Activated CD4-positive, alpha-beta memory T cell treated with anti-CD3 and anti-CD28 coated beads for 36 hours (primary cell): ENCODE measurements at regions of chr7 and their contacts with region 1.

Region 1: GRCh38 chr7:72493850-72494661 is 81.9 kb upstream of the CALN1 start:
- DNase-seq: peak; percentile 56
- H3K4me3 Mint-ChIP-seq: no peak overlapping the region
- H3K27ac Mint-ChIP-seq: no peak overlapping the region
- H3K4me1 Mint-ChIP-seq: no peaks in the 10 kb centered on the region
- H3K27me3 Mint-ChIP-seq: no peaks in the 10 kb centered on the region

Region 2: GRCh38 chr7:71752171-71752935 is 741.7 kb before region 1 on chr7:
- CTCF ChIA-PET with region 1: interaction called, 5 read pairs
- POLR2A ChIA-PET with region 1: no interaction called
- intact Hi-C with region 1: loop called (anchors 10 kb)
- DNase-seq: peak; percentile 59
- H3K4me3 Mint-ChIP-seq: no peak overlapping the region
- H3K27ac Mint-ChIP-seq: no peak overlapping the region
- H3K4me1 Mint-ChIP-seq: no peaks in the 10 kb centered on the region
- H3K27me3 Mint-ChIP-seq: peaks cover 8% of the 10 kb centered on the region